MCF 10A (cell line): ENCODE measurements at regions of chr1 and their contacts with region 1.

Region 1: DNA sequence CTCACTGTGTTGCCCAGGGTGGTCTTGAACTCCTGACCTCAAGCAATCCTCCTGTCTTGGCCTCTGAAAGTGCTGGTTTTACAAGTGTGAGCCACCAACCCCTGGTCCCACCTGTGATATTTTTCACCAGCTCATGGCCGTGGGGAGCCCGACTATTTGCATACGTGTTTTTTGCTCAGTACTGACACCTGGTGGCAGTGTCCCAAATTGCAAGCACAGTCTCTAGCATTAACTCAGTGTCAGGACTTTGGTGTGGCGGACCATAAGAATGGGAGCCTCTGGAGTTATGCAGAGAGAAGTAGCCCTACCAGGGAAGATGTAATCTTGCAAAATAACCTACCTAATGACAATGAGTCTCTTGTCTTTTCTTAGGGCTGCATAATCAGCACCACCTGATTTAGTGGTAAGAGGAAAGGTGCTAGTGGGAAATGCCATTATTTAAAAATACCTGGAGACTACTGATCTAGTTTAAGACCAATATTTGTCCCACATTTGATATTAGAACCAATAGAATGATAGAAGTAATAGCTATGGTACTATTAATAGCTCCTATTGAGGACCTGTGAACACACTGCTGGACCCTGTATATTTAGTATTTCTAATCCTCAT is 305.4 kb downstream of the DISC1 start:
- DNase-seq: peak; percentile 58
- H3K4me3 Mint-ChIP-seq: no peak overlapping the region
- H3K27ac Mint-ChIP-seq: no peak overlapping the region
- H3K4me1 Mint-ChIP-seq: peaks cover 36% of the 10 kb centered on the region
- H3K27me3 Mint-ChIP-seq: no peaks in the 10 kb centered on the region
- CTCF ChIP-seq: peak; percentile 90

Region 2: DNA sequence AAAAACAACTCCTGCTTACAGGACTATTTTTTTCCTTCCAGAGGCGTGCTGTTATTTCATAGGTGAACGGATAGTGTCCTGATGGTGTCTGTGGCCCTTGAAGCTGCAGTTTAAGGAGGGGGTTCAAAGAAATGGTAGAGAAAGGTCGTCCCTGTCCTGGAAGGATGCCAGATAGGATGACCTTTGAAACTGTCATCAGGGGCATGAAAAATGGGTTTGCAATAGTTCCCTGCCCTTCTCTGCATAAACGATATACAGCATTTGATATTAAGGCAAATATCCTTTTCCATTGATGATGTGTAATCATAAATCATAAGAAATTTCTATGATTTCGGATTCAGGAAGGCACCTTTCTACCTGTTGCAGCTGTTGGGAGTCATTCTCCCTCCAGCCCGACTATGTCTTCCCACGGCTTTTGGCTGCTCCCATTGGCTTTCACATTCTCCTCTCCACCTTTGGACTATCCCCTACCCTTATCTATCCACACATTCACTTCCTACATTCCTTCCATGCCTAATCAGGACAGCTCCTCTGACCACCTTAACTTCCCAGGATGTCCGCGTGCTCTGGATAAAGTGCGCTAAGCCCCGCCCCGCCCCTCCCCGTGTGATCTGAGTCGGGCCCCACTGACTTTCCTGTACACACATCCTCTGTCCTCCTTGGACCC is 95.6 kb before region 1 on chr1:
- CTCF ChIA-PET with region 1: no interaction called
- POLR2A ChIA-PET with region 1: no interaction called
- intact Hi-C with region 1: no loop called
- DNase-seq: no peak
- H3K4me3 Mint-ChIP-seq: no peak overlapping the region
- H3K27ac Mint-ChIP-seq: no peak overlapping the region
- H3K4me1 Mint-ChIP-seq: peaks cover 57% of the 10 kb centered on the region
- H3K27me3 Mint-ChIP-seq: no peaks in the 10 kb centered on the region
- CTCF ChIP-seq: no peak

Region 3: GRCh38 chr1:231918239-231919015 is 13.5 kb before region 1 on chr1:
- CTCF ChIA-PET with region 1: interaction called, 10 read pairs
- POLR2A ChIA-PET with region 1: interaction called, 12 read pairs
- intact Hi-C with region 1: no loop called
- DNase-seq: peak; percentile 53
- H3K4me3 Mint-ChIP-seq: no peak overlapping the region
- H3K27ac Mint-ChIP-seq: peak overlapping the region; percentile 22
- H3K4me1 Mint-ChIP-seq: peaks cover 24% of the 10 kb centered on the region
- H3K27me3 Mint-ChIP-seq: no peaks in the 10 kb centered on the region
- CTCF ChIP-seq: no peak

Region 4: DNA sequence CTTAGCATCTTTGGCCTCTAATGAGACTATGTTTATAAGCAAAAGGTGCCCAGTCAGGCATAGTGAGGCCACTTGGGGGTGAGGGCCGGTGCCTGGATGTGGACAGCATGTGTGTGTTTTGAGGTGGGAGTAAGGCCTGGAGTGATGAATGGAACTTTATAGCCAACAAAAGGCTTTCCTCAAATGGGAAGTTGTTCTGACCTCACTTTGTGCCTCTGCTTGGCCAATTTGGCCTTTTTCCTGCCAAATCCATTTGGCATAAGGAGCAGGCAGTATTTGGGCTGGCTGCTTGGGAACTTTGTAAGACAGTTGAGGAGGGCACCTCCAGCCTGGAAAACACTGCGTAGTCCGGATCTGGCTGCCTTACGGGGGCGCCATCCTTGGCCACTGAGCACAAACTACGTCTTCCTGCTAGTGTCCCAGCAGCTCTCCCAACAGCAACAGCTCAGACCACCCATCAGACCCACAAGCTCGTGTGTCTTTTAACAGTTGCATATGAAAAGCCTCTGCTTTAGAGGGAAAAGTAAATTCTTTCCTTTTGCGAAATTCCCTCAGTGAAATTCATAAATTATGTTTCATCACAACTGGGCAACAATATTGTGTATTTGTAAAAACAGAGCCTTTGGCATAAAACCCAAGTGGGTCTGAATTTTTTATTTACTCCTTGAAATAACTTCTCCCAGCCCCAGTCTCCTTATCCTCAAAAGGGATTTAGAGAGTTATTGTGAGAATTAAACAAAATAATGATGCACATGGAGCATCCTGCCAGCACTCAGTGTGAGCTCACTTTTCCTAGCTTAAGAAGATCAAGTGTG is 17.5 kb after region 1 on chr1:
- CTCF ChIA-PET with region 1: interaction called, 13 read pairs
- POLR2A ChIA-PET with region 1: interaction called, 5 read pairs
- intact Hi-C with region 1: no loop called
- DNase-seq: no peak
- H3K4me3 Mint-ChIP-seq: no peak overlapping the region
- H3K27ac Mint-ChIP-seq: no peak overlapping the region
- H3K4me1 Mint-ChIP-seq: no peaks in the 10 kb centered on the region
- H3K27me3 Mint-ChIP-seq: no peaks in the 10 kb centered on the region
- CTCF ChIP-seq: no peak

Region 5: GRCh38 chr1:232149287-232150201 is 217.6 kb after region 1 on chr1:
- CTCF ChIA-PET with region 1: no interaction called
- POLR2A ChIA-PET with region 1: interaction called, 14 read pairs
- intact Hi-C with region 1: no loop called
- DNase-seq: peak; percentile 72
- H3K4me3 Mint-ChIP-seq: no peak overlapping the region
- H3K27ac Mint-ChIP-seq: peak overlapping the region; percentile 52
- H3K4me1 Mint-ChIP-seq: peaks cover 14% of the 10 kb centered on the region
- H3K27me3 Mint-ChIP-seq: no peaks in the 10 kb centered on the region
- CTCF ChIP-seq: no peak